CD4-positive, alpha-beta T cell (primary cell): ENCODE measurements at regions of chr1 and their contacts with region 1.

Region 1: GRCh38 chr1:192477630-192478029 is 97.9 kb upstream of the RGS1 start:
- DNase-seq: peak in 3 of 14 experiments; percentile 63 to 67 (median 66)
- ATAC-seq: peak; percentile 85
- H3K4me3 ChIP-seq: no peak overlapping the region
- H3K4me3 Mint-ChIP-seq: no peak overlapping the region
- H3K27ac ChIP-seq: no peak overlapping the region
- H3K27ac Mint-ChIP-seq: no peak overlapping the region
- H3K4me1 ChIP-seq: no peaks in the 10 kb centered on the region
- H3K4me1 Mint-ChIP-seq: no peaks in the 10 kb centered on the region
- H3K27me3 ChIP-seq: peaks cover 0 to 11% of the 10 kb centered on the region in 2 experiments
- H3K27me3 Mint-ChIP-seq: no peaks in the 10 kb centered on the region
- CTCF ChIP-seq: peak; percentile 70

Region 2: GRCh38 chr1:192539297-192540092 is 61.9 kb after region 1 on chr1:
- CTCF ChIA-PET with region 1: interaction called, 3 read pairs
- POLR2A ChIA-PET with region 1: no interaction called
- intact Hi-C with region 1: loop called in 1 of 2 experiments (anchors 2 kb)
- DNase-seq: peak in 2 of 14 experiments; percentile 36 to 42
- ATAC-seq: peak; percentile 34
- H3K4me3 ChIP-seq: no peak overlapping the region
- H3K4me3 Mint-ChIP-seq: no peak overlapping the region
- H3K27ac ChIP-seq: peak overlapping the region in 1 of 2 donors; percentile 37
- H3K27ac Mint-ChIP-seq: peak overlapping the region; percentile 84
- H3K4me1 ChIP-seq: peaks cover 11% of the 10 kb centered on the region
- H3K4me1 Mint-ChIP-seq: peaks cover 51% of the 10 kb centered on the region
- H3K27me3 ChIP-seq: no peaks in the 10 kb centered on the region
- H3K27me3 Mint-ChIP-seq: no peaks in the 10 kb centered on the region
- CTCF ChIP-seq: no peak

Region 3: DNA sequence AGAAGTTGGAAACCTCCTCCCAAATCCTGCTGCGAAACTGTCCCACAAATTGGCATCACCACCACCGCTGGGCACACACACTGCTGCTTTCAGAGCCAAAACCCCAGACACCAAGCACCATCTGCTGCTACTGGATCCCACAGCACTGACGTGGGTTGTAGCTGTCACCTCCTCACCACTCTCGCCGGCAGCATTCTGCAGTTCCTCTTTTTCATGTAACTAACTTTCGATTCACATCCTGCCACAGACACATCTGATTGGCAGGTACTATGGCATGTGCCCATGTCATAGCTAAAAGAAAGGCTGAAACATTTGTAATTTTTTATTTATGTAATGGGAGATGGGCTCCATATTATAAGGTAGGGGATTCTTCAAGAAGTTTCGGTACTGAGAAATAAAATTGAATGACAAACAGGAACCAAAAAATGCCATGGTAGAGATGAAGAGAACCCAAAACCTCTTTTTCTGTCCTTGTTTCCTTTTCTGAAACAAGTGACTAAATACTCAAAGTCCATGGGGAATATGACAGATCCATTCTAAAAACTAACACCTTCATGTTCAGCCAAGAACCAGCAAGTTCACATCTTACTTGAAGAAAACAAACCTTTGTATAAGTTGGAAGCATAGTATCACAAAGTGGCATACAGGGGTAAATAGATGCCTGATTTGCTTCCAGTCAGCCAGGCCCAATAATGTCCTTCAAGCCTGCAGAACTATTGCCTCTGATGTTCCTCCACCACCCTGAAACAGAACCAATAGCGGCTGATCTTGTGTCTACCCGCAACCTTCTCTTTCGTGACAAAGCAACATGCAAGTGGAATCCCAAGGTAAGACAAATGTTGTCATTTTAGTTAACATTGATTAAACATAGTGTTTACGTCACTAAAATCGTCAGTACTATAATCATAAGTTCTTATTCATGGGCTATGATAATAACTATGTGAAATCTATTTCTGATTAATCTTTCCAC is 131.8 kb after region 1 on chr1:
- CTCF ChIA-PET with region 1: interaction called, 10 read pairs
- POLR2A ChIA-PET with region 1: interaction called, 5 read pairs
- intact Hi-C with region 1: loop called (anchors 1 kb)
- DNase-seq: peak; percentile 26 to 88 (median 48)
- ATAC-seq: peak; percentile 99
- H3K4me3 ChIP-seq: no peak overlapping the region
- H3K4me3 Mint-ChIP-seq: peak overlapping the region; percentile 52
- H3K27ac ChIP-seq: no peak overlapping the region
- H3K27ac Mint-ChIP-seq: peak overlapping the region; percentile 67
- H3K4me1 ChIP-seq: peaks cover 11% of the 10 kb centered on the region
- H3K4me1 Mint-ChIP-seq: peaks cover 16% of the 10 kb centered on the region
- H3K27me3 ChIP-seq: no peaks in the 10 kb centered on the region
- H3K27me3 Mint-ChIP-seq: no peaks in the 10 kb centered on the region
- CTCF ChIP-seq: no peak

Region 4: GRCh38 chr1:192808518-192809306 is 331.1 kb after region 1 on chr1 and contains the start of gene RGS2:
- CTCF ChIA-PET with region 1: interaction called, 5 read pairs
- POLR2A ChIA-PET with region 1: interaction called, 6 read pairs
- intact Hi-C with region 1: loop called (anchors 1 to 5 kb)
- DNase-seq: peak; percentile 79 to 95 (median 86)
- ATAC-seq: peak; percentile 87
- H3K4me3 ChIP-seq: peak within 1 kb of the TSS; percentile 65
- H3K4me3 Mint-ChIP-seq: peak within 1 kb of the TSS; percentile 99
- H3K27ac ChIP-seq: peak within 1 kb of the TSS; percentile 33 to 76
- H3K27ac Mint-ChIP-seq: peak within 1 kb of the TSS; percentile 96
- H3K4me1 ChIP-seq: peaks cover 13% of the 10 kb centered on the region
- H3K4me1 Mint-ChIP-seq: peaks cover 36% of the 10 kb centered on the region
- H3K27me3 ChIP-seq: no peaks in the 10 kb centered on the region
- H3K27me3 Mint-ChIP-seq: no peaks in the 10 kb centered on the region
- CTCF ChIP-seq: peak; percentile 23
- total RNA-seq, gene RGS2: 142 to 155 TPM

Region 5: DNA sequence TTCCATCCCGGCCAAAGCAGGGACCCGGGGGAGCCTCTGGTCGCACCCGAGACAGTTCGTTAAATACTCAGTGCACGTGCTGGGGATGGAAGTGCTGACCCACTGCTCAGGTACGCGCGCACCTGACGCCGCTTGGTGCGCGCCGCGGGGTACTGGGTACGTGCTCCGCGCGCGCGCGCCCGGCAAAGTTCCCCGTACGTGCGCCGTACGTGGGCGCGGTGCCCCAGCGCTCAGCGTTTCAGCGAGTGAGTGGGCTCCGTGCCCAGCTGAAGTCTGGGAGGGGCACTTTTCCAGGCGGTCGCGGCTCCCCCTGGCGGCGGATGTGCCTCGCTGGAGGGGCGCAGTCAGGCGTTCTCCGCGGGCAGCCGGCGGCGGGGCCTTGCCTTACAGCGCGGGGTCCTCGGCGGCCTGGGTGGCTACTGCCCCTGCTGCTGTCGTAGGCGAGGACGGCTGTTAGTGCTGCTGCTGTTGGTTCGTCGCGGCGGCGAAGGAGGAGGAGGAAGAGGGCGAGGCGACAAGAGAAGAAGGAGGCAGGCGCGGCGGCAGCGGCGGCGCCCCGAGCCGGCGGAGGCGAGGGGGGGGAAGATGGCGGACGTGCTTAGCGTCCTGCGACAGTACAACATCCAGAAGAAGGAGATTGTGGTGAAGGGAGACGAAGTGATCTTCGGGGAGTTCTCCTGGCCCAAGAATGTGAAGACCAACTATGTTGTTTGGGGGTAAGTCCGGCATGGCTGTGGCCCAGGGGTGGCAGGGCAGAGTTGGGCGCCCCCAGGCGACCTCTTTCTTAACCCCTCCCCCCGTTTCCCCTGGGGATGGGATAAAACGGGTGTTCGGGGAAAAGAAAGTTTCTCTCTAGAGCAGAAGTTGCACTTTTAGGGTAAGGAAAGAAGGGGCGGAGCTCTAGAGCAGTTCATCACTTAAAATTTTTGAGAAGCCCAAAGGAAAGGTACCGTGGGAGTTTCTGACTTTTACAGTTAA is 644.3 kb after region 1 on chr1 and contains the start of gene CDC73:
- CTCF ChIA-PET with region 1: no interaction called
- POLR2A ChIA-PET with region 1: no interaction called
- intact Hi-C with region 1: loop called (anchors 1 to 10 kb)
- DNase-seq: peak; percentile 97 to 100 (median 99)
- ATAC-seq: peak; percentile 92
- H3K4me3 ChIP-seq: peak within 1 kb of the TSS; percentile 96
- H3K4me3 Mint-ChIP-seq: peak within 1 kb of the TSS; percentile 97
- H3K27ac ChIP-seq: peak within 1 kb of the TSS; percentile 91 to 94
- H3K27ac Mint-ChIP-seq: peak within 1 kb of the TSS; percentile 97
- H3K4me1 ChIP-seq: peaks cover 27% of the 10 kb centered on the region
- H3K4me1 Mint-ChIP-seq: peaks cover 54% of the 10 kb centered on the region
- H3K27me3 ChIP-seq: no peaks in the 10 kb centered on the region
- H3K27me3 Mint-ChIP-seq: no peaks in the 10 kb centered on the region
- CTCF ChIP-seq: peak; percentile 94
- total RNA-seq, gene CDC73: 65.4 to 66.5 TPM